Mammary epithelial cell (primary cell): ENCODE measurements at regions of chr3 and their contacts with region 1.

Region 1: DNA sequence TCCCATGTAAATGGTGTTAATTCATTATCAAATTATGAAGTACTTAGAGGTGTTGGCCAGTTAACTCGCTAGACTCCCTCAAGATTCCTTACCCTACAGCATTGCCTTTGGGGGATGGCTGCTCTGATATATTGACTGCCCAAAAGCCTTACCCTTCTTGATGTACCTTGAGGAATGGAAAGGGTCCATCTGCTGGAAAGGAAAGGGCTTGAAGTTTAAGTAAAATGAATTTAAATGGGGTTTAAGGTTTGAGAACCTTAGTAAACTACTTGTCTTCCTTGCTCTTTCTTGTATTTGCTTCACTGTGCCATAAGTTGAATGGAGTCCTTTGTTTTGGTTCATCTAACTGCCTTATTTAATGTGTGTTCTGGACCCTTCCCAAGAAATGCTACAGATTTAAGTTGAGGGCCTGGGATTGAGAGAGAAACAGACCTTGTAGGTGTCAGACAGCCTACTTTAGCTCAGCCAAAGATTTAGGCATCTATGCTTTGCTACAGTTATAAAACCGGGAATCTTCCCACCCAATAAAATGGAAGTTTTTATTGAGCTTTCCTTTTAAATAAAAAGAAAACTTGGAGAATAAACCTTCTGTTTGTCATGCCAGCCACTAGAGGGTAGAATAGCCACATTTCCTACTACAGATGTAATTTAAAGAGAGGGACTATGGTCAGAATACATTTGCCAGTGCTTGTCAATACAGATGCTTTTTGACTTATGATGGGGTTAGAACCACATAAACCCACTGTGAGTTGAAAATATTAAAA is 25.3 kb downstream of the CMSS1 start:
- DNase-seq: peak; percentile 40
- H3K4me3 ChIP-seq: no peak overlapping the region
- H3K27ac ChIP-seq: peak overlapping the region; percentile 17
- H3K4me1 ChIP-seq: peaks cover 5% of the 10 kb centered on the region
- H3K27me3 ChIP-seq: no peaks in the 10 kb centered on the region
- CTCF ChIP-seq: peak; percentile 68 to 74

Region 2: GRCh38 chr3:99925584-99926212 is 82.7 kb after region 1 on chr3:
- CTCF ChIA-PET with region 1: no interaction called
- dilution Hi-C with region 1: no loop called
- in situ Hi-C with region 1: no loop called
- intact Hi-C with region 1: loop called (anchors 5 kb)
- DNase-seq: peak; percentile 77
- H3K4me3 ChIP-seq: no peak overlapping the region
- H3K27ac ChIP-seq: no peak overlapping the region
- H3K4me1 ChIP-seq: peaks cover 36% of the 10 kb centered on the region
- H3K27me3 ChIP-seq: no peaks in the 10 kb centered on the region
- CTCF ChIP-seq: no peak

Region 3: GRCh38 chr3:100002599-100003350 is 159.8 kb after region 1 on chr3:
- CTCF ChIA-PET with region 1: no interaction called
- dilution Hi-C with region 1: no loop called
- in situ Hi-C with region 1: no loop called
- intact Hi-C with region 1: loop called (anchors 2 kb)
- DNase-seq: peak; percentile 99
- H3K4me3 ChIP-seq: no peak overlapping the region
- H3K27ac ChIP-seq: peak overlapping the region; percentile 83
- H3K4me1 ChIP-seq: peaks cover 38% of the 10 kb centered on the region
- H3K27me3 ChIP-seq: no peaks in the 10 kb centered on the region
- CTCF ChIP-seq: no peak

Region 4: GRCh38 chr3:100057716-100058575 is 214.9 kb after region 1 on chr3:
- CTCF ChIA-PET with region 1: interaction called, 3 read pairs
- dilution Hi-C with region 1: no loop called
- in situ Hi-C with region 1: no loop called
- intact Hi-C with region 1: loop called (anchors 1 kb)
- DNase-seq: peak; percentile 22
- H3K4me3 ChIP-seq: no peak overlapping the region
- H3K27ac ChIP-seq: no peak overlapping the region
- H3K4me1 ChIP-seq: no peaks in the 10 kb centered on the region
- H3K27me3 ChIP-seq: no peaks in the 10 kb centered on the region
- CTCF ChIP-seq: peak in 1 of 2 donors; percentile 46

Region 5: GRCh38 chr3:100234364-100234763 is 391.4 kb after region 1 on chr3:
- CTCF ChIA-PET with region 1: interaction called, 13 read pairs
- dilution Hi-C with region 1: no loop called
- in situ Hi-C with region 1: no loop called
- intact Hi-C with region 1: no loop called
- DNase-seq: no peak
- H3K4me3 ChIP-seq: no peak overlapping the region
- H3K27ac ChIP-seq: no peak overlapping the region
- H3K4me1 ChIP-seq: no peaks in the 10 kb centered on the region
- H3K27me3 ChIP-seq: no peaks in the 10 kb centered on the region
- CTCF ChIP-seq: no peak

Region 6: GRCh38 chr3:100254168-100254777 is 411.3 kb after region 1 on chr3:
- CTCF ChIA-PET with region 1: interaction called, 9 read pairs
- dilution Hi-C with region 1: no loop called
- in situ Hi-C with region 1: no loop called
- intact Hi-C with region 1: loop called (anchors 1 kb)
- DNase-seq: peak; percentile 26
- H3K4me3 ChIP-seq: no peak overlapping the region
- H3K27ac ChIP-seq: no peak overlapping the region
- H3K4me1 ChIP-seq: no peaks in the 10 kb centered on the region
- H3K27me3 ChIP-seq: no peaks in the 10 kb centered on the region
- CTCF ChIP-seq: peak; percentile 55 to 77